Left cardiac atrium (tissue), 4 donors: ENCODE measurements at regions of chr19 and their contacts with region 1.

Region 1: DNA sequence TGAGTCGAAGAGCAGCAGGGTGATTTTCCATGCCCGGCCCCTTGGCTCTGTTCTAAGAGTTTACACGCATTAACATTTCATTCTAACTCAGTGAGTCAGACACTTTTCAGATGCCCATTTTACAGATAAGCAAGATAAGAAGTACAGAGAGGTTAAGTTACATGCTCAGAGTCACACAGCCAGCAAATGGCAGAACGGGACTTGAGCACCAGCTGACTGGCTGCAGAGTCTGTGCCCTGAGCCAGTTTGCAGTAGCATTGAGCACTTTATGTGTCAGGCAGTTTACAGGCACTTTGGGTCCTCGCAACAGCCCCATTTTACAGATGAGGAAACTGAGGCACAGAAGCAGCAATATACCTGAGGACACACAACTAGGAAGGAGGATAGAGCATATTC is 19.0 kb downstream of the CCDC8 start:
- DNase-seq: no peak
- ATAC-seq: no peak

Region 2: GRCh38 chr19:46513461-46514236 is 119.2 kb after region 1 on chr19:
- intact Hi-C with region 1: loop called in 1 of 2 experiments (anchors 2 kb)
- DNase-seq: peak; percentile 85
- ATAC-seq: peak; percentile 86 to 91